Activated naive CD4-positive, alpha-beta T cell treated with anti-CD3 and anti-CD28 coated beads for 36 hours (primary cell): ENCODE measurements at regions of chr19 and their contacts with region 1.

Region 1: DNA sequence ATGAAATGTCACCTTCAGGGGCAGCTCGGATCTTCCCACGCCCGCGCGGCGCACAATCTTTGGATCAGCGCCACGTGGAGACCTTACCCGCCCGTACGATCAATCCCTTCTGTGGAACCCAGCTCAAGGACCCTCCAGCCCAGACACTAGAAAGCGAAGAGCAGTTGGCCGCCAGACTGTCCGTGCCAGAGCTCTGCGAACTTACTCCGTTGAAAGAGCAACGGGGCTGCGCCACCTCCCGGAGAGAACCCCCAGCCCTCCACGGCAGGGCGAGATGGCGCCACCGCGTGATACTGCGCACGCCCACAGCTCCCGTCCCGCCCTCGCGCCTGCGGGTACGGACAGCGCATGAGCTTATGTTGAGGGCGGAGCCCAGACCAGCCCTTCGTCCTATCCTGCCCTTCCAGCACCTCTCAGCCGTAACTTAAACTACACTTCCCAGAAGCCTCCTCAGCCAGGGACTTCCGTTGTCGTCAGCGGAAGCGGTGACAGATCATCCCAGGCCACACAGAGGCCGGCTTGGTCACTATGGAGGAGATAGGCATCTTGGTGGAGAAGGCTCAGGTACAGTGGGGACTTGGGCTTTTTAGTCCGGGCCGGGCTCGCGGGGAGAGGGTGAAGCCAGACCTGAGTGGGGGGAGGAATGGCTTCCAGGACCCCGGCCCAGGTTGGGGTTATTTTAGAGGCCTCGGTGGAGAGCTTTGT is at the start of gene PSMC4:
- DNase-seq: peak; percentile 99
- H3K4me3 Mint-ChIP-seq: peak within 1 kb of the TSS; percentile 95
- H3K27ac Mint-ChIP-seq: peak within 1 kb of the TSS; percentile 97
- H3K4me1 Mint-ChIP-seq: peaks cover 48% of the 10 kb centered on the region
- H3K27me3 Mint-ChIP-seq: no peaks in the 10 kb centered on the region
- total RNA-seq, gene PSMC4: 79.7 to 82.1 TPM

Region 2: DNA sequence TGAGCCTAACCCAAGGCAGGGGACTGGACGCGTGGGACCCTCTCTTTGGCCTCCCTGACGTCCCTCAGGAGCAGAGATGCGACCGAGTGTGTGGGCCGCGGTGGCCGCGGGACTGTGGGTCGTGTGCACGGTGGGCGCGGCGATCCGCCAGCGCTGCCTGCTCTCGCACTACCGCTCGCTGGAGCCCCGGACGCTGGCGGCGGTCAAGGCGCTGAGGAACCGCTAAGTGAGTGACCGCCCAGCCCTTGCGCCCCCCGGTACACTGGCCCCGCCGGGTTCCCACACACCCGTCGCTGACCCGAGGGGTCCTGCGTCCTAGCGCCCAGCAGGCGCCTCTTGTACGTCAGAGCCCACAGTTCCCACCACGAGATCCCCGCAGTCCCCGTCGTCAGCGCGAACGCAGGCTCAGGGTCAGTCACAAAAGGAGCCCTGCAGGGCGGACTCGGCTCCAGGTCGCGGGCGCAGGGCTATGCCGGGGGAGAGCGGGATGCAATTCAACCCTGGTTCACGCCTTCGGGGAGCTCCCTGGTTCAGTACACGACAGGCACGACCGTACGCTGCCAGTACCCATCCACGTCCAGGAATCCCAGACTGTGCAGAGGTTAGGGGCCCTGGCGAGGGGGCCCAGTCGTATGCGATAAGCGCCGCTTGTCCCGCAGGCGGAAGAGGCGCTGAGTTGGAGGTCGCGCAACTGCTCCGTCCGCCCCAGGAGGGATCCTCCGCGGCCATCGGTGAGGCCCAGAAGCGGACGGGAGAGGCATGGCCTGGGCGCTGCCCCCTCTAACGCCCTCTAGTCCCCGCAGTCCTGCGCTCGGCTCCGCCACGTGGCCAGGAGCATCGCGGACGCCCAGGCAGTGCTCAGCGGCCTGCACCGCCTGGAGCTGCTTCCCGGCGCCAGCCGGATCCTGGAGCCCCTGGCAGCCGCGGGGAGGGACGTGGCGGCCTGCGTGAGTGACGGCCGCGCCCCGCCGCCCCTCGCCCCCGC is 706.2 kb before region 1 on chr19:
- CTCF ChIA-PET with region 1: no interaction called
- intact Hi-C with region 1: no loop called
- DNase-seq: no peak
- H3K4me3 Mint-ChIP-seq: no peak overlapping the region
- H3K27ac Mint-ChIP-seq: no peak overlapping the region
- H3K4me1 Mint-ChIP-seq: peaks cover 13% of the 10 kb centered on the region
- H3K27me3 Mint-ChIP-seq: peaks cover 29% of the 10 kb centered on the region

Region 3: DNA sequence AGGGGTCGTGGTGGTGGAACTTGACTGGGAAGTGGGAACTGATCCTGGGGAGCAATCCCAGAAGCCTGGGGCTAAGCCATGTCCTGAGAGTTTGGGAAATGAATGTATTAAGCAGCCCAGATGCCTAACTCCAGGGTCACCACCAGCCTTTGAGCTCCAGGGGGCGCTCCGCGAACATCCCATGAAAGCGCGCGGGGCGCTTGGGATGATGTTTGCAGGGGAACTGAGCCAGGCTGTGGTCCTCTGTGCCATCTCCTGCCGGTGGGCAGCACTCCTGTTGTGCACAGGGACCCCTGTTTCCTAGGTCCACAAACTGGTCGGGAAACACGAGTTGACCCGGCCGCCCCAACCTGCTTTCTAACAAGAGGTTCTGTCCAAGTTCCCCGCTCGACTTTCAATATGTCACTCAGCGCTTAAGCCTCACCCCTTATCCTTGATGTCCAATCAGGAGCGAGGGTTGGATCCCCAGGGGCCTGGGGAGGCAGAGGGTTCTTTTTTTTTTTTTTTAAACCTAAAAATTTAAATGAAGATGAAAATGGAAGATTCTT is 177.8 kb before region 1 on chr19:
- CTCF ChIA-PET with region 1: interaction called, 6 read pairs
- intact Hi-C with region 1: loop called (anchors 1 kb)
- DNase-seq: peak; percentile 85
- H3K4me3 Mint-ChIP-seq: peak overlapping the region; percentile 73
- H3K27ac Mint-ChIP-seq: no peak overlapping the region
- H3K4me1 Mint-ChIP-seq: no peaks in the 10 kb centered on the region
- H3K27me3 Mint-ChIP-seq: peaks cover 2% of the 10 kb centered on the region

Region 4: GRCh38 chr19:39846176-39846677 is 124.6 kb before region 1 on chr19 and contains the start of gene FBL:
- CTCF ChIA-PET with region 1: interaction called, 14 read pairs
- intact Hi-C with region 1: no loop called
- DNase-seq: peak; percentile 98
- H3K4me3 Mint-ChIP-seq: peak within 1 kb of the TSS; percentile 91
- H3K27ac Mint-ChIP-seq: peak within 1 kb of the TSS; percentile 88
- H3K4me1 Mint-ChIP-seq: peaks cover 38% of the 10 kb centered on the region
- H3K27me3 Mint-ChIP-seq: no peaks in the 10 kb centered on the region
- total RNA-seq, gene FBL: 742 to 785 TPM

Region 5: DNA sequence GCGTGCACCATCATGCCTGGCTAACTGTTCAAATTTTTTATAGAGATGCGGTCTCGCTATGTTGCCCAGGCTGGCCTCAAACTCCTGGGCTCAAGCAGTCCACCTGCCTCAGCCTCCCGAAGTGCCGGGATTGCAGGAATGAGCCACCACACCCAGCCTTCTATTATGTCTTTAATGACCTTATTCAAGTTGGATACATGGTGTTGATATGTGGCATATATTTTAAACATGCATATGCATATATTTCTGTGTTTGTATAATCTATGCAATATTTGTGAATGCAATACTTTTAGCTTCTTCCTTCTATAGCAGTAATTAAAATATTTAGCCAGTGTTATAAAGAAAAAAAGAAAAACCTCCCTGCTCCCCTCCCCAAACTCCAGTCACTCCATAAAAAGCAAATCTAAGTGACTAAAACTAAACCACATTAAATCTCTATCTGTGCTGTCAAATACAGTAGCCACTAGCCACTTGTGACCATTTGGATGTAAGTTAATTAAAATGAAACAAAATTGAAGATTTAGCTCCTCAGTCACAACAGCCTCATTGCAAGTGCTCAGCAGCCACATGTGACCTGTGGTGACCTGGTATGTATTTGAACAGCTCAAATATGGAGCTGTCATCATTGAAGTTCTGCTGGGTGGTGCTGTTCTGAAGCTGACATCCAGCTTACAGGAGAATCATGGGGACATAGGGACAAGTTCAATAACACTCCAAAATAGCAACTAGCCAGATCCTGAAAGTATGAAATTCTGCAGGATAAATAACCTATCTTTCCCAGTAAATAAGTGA is 63.8 kb before region 1 on chr19:
- CTCF ChIA-PET with region 1: interaction called, 13 read pairs
- intact Hi-C with region 1: no loop called
- DNase-seq: no peak
- H3K4me3 Mint-ChIP-seq: no peak overlapping the region
- H3K27ac Mint-ChIP-seq: no peak overlapping the region
- H3K4me1 Mint-ChIP-seq: peaks cover 12% of the 10 kb centered on the region
- H3K27me3 Mint-ChIP-seq: no peaks in the 10 kb centered on the region

Region 6: GRCh38 chr19:39941615-39942365 is 29.0 kb before region 1 on chr19:
- CTCF ChIA-PET with region 1: interaction called, 22 read pairs
- intact Hi-C with region 1: loop called (anchors 1 kb)
- DNase-seq: peak; percentile 75
- H3K4me3 Mint-ChIP-seq: peak overlapping the region; percentile 46
- H3K27ac Mint-ChIP-seq: peak overlapping the region; percentile 74
- H3K4me1 Mint-ChIP-seq: peaks cover 74% of the 10 kb centered on the region
- H3K27me3 Mint-ChIP-seq: no peaks in the 10 kb centered on the region

Region 7: DNA sequence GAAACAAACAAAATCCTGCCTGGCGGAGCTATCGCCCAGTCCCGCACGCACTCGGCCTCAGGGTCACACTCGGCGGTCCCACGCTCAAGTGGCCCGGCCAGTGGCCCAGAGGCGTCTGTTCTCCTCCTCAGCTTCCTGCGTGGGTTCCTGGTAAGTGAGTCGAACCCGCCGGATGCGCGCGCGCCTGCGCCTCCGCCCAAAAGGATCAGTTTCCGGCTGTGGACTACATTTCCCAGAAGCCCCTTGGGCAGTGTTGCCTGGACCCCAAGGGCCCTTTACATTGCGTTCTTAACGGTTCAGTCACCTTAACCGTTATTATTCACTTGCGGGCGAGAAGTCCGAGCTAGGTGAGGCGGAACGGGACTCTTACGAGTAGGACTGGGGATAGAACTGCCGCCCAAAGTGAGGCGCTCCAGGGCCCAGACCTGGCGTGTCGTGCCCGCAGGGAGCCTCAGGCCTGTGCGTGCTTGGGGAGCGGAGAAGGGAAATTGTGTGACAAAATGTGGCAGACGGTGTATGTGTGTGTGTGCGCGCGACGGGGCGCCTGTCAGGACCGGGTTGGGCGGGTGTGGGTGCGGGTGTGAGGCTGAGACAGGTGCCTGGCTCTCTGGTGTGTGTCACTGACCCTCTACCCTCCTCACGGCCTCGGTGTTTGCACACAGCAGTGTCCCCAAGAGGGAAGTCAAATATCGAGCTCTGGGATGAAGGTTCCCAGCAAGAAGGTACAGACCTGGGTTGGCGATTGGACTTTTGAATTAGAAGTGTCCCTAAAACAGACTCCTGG is 26.2 kb after region 1 on chr19 and contains the start of gene ZNF546:
- CTCF ChIA-PET with region 1: interaction called, 7 read pairs
- intact Hi-C with region 1: loop called (anchors 1 kb)
- DNase-seq: peak; percentile 94
- H3K4me3 Mint-ChIP-seq: peak within 1 kb of the TSS; percentile 93
- H3K27ac Mint-ChIP-seq: peak within 1 kb of the TSS; percentile 94
- H3K4me1 Mint-ChIP-seq: peaks cover 41% of the 10 kb centered on the region
- H3K27me3 Mint-ChIP-seq: no peaks in the 10 kb centered on the region
- total RNA-seq, gene ZNF546: 1.6 to 2.3 TPM